Endothelial cell of umbilical vein (primary cell): ENCODE measurements at regions of chr19 and their contacts with region 1.

Region 1: DNA sequence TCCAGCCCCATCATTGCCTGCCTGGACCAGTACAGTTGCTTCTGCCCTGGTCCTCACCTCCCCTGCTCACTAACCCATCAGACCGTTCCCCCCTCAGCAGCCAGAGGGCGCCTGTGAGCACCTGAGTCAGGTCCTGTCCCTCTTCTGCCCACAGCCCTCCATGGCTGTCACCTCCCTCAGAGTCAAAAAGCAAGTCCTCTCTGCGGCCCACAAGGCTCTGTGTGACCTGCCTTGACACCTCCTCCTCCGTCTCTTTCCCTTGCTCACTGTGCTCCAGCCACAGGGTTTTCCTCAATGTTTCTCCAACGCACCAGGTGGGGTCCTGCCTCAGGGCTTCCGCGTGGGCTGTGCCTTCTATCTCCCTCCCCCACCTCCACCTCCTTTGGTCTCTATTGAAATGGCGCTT is 29.4 kb upstream of the PTPRS start:
- DNase-seq: peak; percentile 35
- H3K4me3 ChIP-seq: no peak overlapping the region
- H3K27ac ChIP-seq: no peak overlapping the region
- H3K4me1 ChIP-seq: no peaks in the 10 kb centered on the region
- H3K27me3 ChIP-seq: no peaks in the 10 kb centered on the region
- CTCF ChIP-seq: peak; percentile 56 to 76
- POLR2A ChIP-seq: no peak

Region 2: GRCh38 chr19:5480427-5480836 is 110.5 kb after region 1 on chr19:
- CTCF ChIA-PET with region 1: no interaction called
- POLR2A ChIA-PET with region 1: no interaction called
- dilution Hi-C with region 1: loop called (anchors 25 kb)
- intact Hi-C with region 1: no loop called
- DNase-seq: peak; percentile 12
- H3K4me3 ChIP-seq: no peak overlapping the region
- H3K27ac ChIP-seq: no peak overlapping the region
- H3K4me1 ChIP-seq: no peaks in the 10 kb centered on the region
- H3K27me3 ChIP-seq: peaks cover 2 to 5% of the 10 kb centered on the region in 2 experiments
- CTCF ChIP-seq: peak; percentile 46 to 65
- POLR2A ChIP-seq: no peak

Region 3: DNA sequence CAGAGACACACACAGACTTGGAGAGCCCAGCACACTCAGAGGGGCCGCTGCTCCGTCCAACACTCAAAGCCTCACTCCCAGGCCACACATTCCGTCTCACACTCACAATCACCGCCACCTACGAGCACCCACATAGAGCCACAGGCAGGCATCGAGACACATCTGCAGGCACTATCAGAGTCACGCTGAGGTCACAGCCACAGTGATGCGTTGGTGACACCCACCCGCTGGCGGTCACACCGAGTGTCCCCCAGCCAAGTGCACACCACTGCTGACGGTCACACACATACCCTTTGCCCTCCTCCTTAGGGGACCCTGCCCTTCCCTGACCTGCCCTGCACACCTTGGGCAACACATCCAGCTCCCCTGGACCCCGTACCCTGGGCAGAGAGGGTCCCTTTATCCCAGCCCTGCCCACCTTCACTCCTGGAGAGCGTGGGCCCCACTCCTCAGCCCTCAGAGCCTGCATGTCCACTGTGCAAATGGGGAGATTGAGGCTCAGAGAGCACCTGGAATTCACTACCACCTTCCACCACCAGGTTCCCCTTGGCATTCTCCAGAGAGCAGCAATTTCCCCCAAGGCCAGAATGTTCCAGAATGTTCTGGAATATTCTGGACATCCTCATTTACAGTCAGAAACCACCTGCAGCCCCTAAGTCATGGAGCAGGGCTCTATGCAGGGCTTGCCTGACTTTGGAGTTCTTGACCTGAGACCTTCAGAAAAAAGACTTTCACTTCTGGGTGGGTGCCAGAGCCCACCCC is 494.9 kb after region 1 on chr19:
- CTCF ChIA-PET with region 1: no interaction called
- POLR2A ChIA-PET with region 1: no interaction called
- dilution Hi-C with region 1: no loop called
- intact Hi-C with region 1: no loop called
- DNase-seq: no peak
- H3K4me3 ChIP-seq: no peak overlapping the region
- H3K27ac ChIP-seq: no peak overlapping the region
- H3K4me1 ChIP-seq: no peaks in the 10 kb centered on the region
- H3K27me3 ChIP-seq: no peaks in the 10 kb centered on the region
- CTCF ChIP-seq: no peak
- POLR2A ChIP-seq: no peak